ENCODE measurements at regions of chr1 and their contacts with region 1.

Region 1: DNA sequence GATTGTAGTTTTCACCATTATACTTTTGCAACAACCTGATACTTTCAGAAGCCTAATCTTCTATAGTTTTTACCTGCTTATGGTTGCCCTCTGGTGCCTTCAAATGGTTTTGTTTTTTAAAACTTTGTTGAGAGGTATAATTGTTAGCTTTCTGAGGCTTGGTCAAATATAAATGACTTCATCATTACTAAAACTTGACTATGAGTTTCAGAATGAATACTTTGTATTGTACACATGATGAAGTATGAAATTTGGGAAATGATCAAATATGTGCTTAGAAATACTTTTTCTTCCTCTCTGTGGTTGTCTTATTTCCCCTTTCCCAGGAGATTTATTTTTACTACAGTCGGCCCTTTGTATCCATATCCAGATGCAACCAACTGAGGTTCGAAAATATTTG is 151.8 kb upstream of the B3GALT2 start:
- DNase-seq: no peak
- H3K4me3 ChIP-seq: no peak overlapping the region
- CTCF ChIP-seq: peak; percentile 6

Region 2: GRCh38 chr1:193183019-193183627 is 155.1 kb before region 1 on chr1:
- CTCF ChIA-PET with region 1: interaction called, 38 read pairs
- POLR2A ChIA-PET with region 1: no interaction called
- DNase-seq: no peak
- H3K4me3 ChIP-seq: peak overlapping the region; percentile 34
- CTCF ChIP-seq: peak; percentile 51

Region 3: DNA sequence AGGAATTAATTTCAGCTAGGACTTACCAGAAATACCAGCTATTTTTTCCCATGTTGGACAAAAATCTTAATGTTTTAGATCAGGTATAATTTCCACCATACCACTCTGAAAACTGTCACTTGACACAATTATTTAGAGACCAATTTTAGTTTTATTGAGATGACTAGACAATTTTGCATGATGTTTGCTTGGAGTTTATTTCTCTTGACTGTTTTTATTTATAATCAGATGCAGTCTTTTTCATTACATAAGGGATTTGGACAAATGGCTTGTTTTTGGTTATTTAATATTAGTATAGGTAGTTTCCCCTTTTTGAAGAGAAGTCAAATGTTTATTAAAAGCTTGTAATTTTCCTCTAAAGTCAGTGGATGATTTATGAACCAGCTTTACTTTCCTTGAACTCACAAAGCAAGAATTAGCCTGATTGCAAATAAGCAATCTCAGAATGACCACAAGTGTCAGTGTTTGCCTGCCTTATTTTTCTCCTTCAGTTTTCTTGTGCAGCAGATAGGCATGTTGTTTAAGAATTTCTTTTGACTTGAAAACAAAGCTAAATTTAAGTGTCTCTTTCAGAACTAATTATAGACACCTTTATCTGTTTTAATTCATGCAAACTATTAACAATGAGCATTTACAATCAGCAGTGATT is 148.0 kb before region 1 on chr1:
- CTCF ChIA-PET with region 1: interaction called, 38 read pairs
- POLR2A ChIA-PET with region 1: no interaction called
- DNase-seq: no peak
- H3K4me3 ChIP-seq: no peak overlapping the region
- CTCF ChIP-seq: peak; percentile 38

Region 4: GRCh38 chr1:193311226-193311948 is 26.8 kb before region 1 on chr1:
- CTCF ChIA-PET with region 1: no interaction called
- POLR2A ChIA-PET with region 1: no interaction called
- DNase-seq: no peak
- H3K4me3 ChIP-seq: no peak overlapping the region
- CTCF ChIP-seq: no peak

Region 5: GRCh38 chr1:193348091-193348768 is 10.0 kb after region 1 on chr1:
- CTCF ChIA-PET with region 1: interaction called, 11 read pairs
- POLR2A ChIA-PET with region 1: interaction called, 6 read pairs
- DNase-seq: peak; percentile 26
- H3K4me3 ChIP-seq: no peak overlapping the region
- CTCF ChIP-seq: no peak

Measured in AG04449 (cell line).